IMR-90 (cell line): ENCODE measurements at regions of chr1 and their contacts with region 1.

Region 1: DNA sequence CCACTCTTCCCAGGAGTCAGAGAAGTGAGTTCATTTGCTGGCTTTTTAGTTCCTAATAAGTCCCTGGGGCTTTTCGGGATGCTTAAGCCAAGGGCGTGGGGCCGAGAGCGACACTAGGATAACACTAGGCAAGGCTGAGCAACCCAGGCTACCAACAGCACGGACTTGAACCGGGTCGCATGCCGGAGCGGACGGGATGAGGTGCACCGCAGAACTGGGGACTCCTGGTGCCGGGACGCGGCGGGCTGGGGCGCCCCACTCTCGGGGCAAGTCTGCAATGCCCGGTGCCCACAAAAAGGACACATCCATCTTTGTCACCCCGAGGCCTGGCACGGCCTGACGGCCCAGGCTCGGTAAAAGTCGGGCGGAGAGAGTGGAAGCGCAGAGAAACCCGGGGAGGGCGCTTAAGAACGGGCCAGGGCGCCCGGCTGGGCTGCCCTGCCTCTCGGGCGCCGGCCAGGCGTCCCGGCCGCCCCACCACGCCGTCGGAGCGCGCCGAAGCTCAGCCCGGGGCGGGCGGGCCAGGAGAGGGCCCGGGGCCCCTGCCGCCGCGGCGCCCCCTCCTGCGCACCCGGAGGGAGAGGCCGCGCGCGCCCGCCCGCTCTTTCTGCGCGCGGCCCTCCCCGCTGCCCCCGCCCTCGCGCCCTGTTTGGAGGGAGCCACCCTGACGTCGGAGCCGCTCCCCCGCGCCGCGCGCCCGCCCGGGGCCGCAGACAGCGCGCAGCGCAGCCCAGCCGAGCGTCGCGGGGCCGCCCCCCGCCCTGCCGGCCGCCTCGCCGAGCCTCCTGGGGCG is at the start of gene NBL1:
- DNase-seq: peak; percentile 54
- ATAC-seq: peak; percentile 90
- H3K4me3 ChIP-seq: peak within 1 kb of the TSS; percentile 72
- H3K27ac ChIP-seq: peak within 1 kb of the TSS; percentile 71
- H3K4me1 ChIP-seq: peaks cover 22% of the 10 kb centered on the region; the same call in 1 of the 2 replicates
- H3K27me3 ChIP-seq: no peaks in the 10 kb centered on the region
- CTCF ChIP-seq: peak; percentile 21; the same call in 1 of the 2 replicates
- POLR2A ChIP-seq: no peak
- RAD21 ChIP-seq: 0 out of 2 replicates have a peak, but pooled peaks have one; percentile 7
- total RNA-seq, gene NBL1: 12.5 and 14.0 TPM in 2 replicates

Region 2: GRCh38 chr1:19341201-19342072 is 302.4 kb before region 1 on chr1:
- CTCF ChIA-PET with region 1: no interaction called
- POLR2A ChIA-PET with region 1: interaction called, 3 read pairs
- dilution Hi-C with region 1: no loop called
- in situ Hi-C with region 1: loop called (anchors 5 kb)
- intact Hi-C with region 1: no loop called
- DNase-seq: peak; percentile 65
- ATAC-seq: peak; percentile 87
- H3K4me3 ChIP-seq: no peak overlapping the region
- H3K27ac ChIP-seq: no peak overlapping the region
- H3K4me1 ChIP-seq: no peaks in the 10 kb centered on the region
- H3K27me3 ChIP-seq: no peaks in the 10 kb centered on the region
- CTCF ChIP-seq: peak; percentile 85
- POLR2A ChIP-seq: no peak
- RAD21 ChIP-seq: peak; percentile 61

Region 3: GRCh38 chr1:19398309-19398760 is 245.5 kb before region 1 on chr1:
- CTCF ChIA-PET with region 1: no interaction called
- POLR2A ChIA-PET with region 1: no interaction called
- dilution Hi-C with region 1: no loop called
- in situ Hi-C with region 1: no loop called
- intact Hi-C with region 1: loop called (anchors 2 kb)
- DNase-seq: peak; percentile 99
- ATAC-seq: peak; percentile 87
- H3K4me3 ChIP-seq: no peak overlapping the region
- H3K27ac ChIP-seq: peak overlapping the region; percentile 56
- H3K4me1 ChIP-seq: peaks cover 46% of the 10 kb centered on the region
- H3K27me3 ChIP-seq: no peaks in the 10 kb centered on the region
- CTCF ChIP-seq: peak; percentile 74
- POLR2A ChIP-seq: no peak; the same call in 1 of the 2 replicates
- RAD21 ChIP-seq: peak; percentile 59

Region 4: DNA sequence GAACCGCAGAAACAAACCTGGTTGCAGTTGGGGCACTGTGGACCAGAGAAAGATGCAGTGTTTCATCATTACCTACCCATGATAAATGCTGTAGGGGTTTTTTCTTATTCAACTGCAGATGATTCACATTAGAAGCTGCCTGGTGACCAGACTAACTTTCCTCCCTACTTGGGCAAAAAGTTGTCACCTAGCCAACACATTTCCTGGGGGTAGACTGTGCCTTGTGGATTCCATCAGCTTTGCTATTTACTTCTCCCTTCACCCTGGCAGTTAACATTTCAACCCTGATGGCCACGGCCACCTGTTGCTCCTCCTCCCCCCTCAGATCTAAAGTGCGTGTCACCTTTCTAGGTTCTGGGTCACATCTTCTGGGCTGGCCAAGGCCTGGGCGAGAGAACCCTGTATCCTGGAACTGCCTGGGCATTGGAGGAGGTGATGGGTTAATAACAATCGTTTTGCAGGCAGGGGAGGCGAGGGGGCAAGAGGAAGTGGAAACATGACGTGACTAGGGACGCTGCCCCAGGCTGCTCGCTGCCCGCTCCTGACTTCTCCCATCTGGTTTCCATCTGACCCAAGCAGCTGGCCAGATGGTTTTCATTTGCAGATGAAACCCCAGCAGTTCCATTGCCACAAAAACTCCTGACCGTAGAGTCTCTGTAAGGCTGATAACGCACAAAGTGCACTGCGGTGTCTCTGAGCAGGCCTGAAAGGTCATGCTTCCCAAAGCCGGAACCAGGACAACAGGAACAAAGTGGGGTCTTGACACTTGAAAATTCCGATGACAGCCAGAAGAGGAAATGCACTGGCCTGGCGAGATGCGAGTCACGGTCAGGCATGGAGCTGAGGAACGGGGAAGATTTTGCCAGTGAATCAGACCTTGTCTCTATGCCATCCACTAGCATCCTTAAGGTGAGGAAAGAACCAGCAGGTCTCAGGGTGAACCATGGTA is 195.0 kb before region 1 on chr1:
- CTCF ChIA-PET with region 1: no interaction called
- POLR2A ChIA-PET with region 1: no interaction called
- dilution Hi-C with region 1: no loop called
- in situ Hi-C with region 1: no loop called
- intact Hi-C with region 1: loop called (anchors 2 kb)
- DNase-seq: peak; percentile 93
- ATAC-seq: peak; percentile 53
- H3K4me3 ChIP-seq: no peak overlapping the region
- H3K27ac ChIP-seq: peak overlapping the region; percentile 87
- H3K4me1 ChIP-seq: peaks cover 51% of the 10 kb centered on the region
- H3K27me3 ChIP-seq: no peaks in the 10 kb centered on the region
- CTCF ChIP-seq: no peak
- POLR2A ChIP-seq: no peak
- RAD21 ChIP-seq: peak; percentile 23

Region 5: DNA sequence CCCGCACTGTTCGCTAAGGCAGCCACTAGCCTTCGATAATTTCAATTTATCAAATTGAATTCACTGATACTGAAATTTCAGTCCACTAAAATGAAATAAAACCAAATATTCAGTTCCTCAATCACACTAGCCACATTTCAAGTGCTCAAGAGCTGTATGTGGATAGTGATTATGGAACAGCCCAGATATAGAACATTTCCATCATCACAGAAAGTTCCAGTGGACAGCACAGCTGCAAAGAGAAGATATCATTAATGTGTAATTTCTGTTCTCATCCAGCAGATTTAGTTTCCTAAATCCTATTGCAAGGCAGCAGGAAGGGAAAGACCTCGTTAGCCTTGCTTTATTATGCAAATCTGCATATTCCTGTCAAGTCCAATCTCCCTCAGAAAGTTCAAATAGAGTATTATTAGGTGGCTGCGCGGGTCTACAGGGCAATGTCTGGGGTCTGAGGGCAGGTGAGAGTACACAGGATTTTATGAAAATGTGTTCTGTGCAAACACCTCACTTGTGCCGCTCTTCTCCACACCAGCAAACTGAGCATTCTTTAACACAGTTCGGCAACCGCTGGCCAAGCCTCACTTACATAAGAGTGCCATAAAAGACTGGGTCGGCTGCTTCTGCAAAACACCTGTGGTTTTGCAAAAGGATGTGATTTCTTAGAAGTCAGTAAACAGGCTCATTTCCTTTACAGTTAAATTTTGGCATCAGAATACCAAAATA is 180.9 kb before region 1 on chr1:
- CTCF ChIA-PET with region 1: no interaction called
- POLR2A ChIA-PET with region 1: no interaction called
- dilution Hi-C with region 1: no loop called
- in situ Hi-C with region 1: no loop called
- intact Hi-C with region 1: no loop called
- DNase-seq: no peak
- ATAC-seq: no peak
- H3K4me3 ChIP-seq: no peak overlapping the region
- H3K27ac ChIP-seq: no peak overlapping the region
- H3K4me1 ChIP-seq: peaks cover 22% of the 10 kb centered on the region
- H3K27me3 ChIP-seq: no peaks in the 10 kb centered on the region
- CTCF ChIP-seq: no peak
- POLR2A ChIP-seq: no peak
- RAD21 ChIP-seq: no peak

Region 6: DNA sequence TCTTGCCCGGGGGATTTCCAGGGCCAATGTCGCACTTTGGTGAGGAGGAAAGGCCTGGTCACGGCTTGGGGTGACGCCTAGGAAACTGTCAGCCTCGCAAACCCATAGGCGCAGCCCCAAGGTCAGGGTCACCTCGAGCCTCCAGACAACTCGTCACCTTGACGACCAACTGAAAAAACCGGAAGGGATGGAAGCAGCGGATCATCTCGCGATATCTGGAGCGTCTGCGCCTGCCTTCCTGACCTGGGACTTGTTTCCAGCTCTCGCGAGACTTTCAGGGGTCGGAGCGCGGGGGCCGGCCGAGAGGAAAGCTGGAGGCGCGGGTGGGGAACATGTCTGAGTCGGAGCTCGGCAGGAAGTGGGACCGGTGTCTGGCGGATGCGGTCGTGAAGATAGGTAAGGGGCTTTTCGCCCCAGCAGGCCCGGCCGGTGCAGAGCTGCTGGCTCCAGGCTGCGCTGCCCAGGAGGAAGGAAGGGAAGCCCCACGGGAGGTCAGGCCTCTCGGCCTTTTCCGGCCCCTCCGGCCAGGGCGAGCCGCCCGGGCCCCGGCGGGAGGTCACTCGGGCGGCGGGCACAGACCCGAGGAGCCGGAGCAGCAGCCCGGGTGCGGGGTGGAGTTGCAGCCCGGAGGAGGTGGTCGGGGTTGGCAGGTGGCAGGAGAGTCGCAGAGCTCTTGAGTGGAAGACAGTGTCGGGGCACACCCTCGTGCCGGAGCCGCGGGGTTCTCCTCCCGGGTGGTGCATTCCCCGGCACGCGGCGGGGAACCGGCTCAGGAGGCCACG is 46.9 kb before region 1 on chr1:
- CTCF ChIA-PET with region 1: no interaction called
- POLR2A ChIA-PET with region 1: no interaction called
- dilution Hi-C with region 1: no loop called
- in situ Hi-C with region 1: no loop called
- intact Hi-C with region 1: loop called (anchors 2 kb)
- DNase-seq: peak; percentile 97
- ATAC-seq: peak; percentile 97
- H3K4me3 ChIP-seq: peak overlapping the region; percentile 72
- H3K27ac ChIP-seq: peak overlapping the region; percentile 80
- H3K4me1 ChIP-seq: no peaks in the 10 kb centered on the region
- H3K27me3 ChIP-seq: no peaks in the 10 kb centered on the region
- CTCF ChIP-seq: no peak
- POLR2A ChIP-seq: peak; percentile 88
- RAD21 ChIP-seq: no peak